Naive thymus-derived CD4-positive, alpha-beta T cell (primary cell): ENCODE measurements at regions of chr2 and their contacts with region 1.

Region 1: GRCh38 chr2:38581193-38582147 is 21.3 kb downstream of the HNRNPLL start:
- DNase-seq: peak in 7 of 9 donors; percentile 64 to 83 (median 77)
- ATAC-seq: peak; percentile 94
- H3K4me3 ChIP-seq: no peak overlapping the region
- H3K4me3 Mint-ChIP-seq: no peak overlapping the region
- H3K27ac ChIP-seq: no peak overlapping the region
- H3K27ac Mint-ChIP-seq: no peak overlapping the region
- H3K4me1 ChIP-seq: peaks cover 0 to 3% of the 10 kb centered on the region in 2 donors
- H3K4me1 Mint-ChIP-seq: peaks cover 0 to 23% (median 0%) of the 10 kb centered on the region in 7 donors
- H3K27me3 ChIP-seq: no peaks in the 10 kb centered on the region
- H3K27me3 Mint-ChIP-seq: no peaks in the 10 kb centered on the region

Region 2: GRCh38 chr2:38535744-38536506 is 45.5 kb before region 1 on chr2:
- CTCF ChIA-PET with region 1: interaction called, 4 read pairs
- POLR2A ChIA-PET with region 1: interaction called, 4 read pairs
- intact Hi-C with region 1: loop called (anchors 1 to 2 kb)
- DNase-seq: peak; percentile 48 to 88 (median 72)
- ATAC-seq: peak; percentile 95
- H3K4me3 ChIP-seq: peak overlapping the region; percentile 40
- H3K4me3 Mint-ChIP-seq: peak overlapping the region; percentile 36 to 72 (median 56)
- H3K27ac ChIP-seq: no peak overlapping the region
- H3K27ac Mint-ChIP-seq: peak overlapping the region in 1 of 9 donors; percentile 59
- H3K4me1 ChIP-seq: peaks cover 0 to 5% of the 10 kb centered on the region in 2 donors
- H3K4me1 Mint-ChIP-seq: peaks cover 0 to 6% (median 3%) of the 10 kb centered on the region in 7 donors
- H3K27me3 ChIP-seq: peaks cover 0 to 4% of the 10 kb centered on the region in 2 donors
- H3K27me3 Mint-ChIP-seq: peaks cover 4 to 37% (median 8%) of the 10 kb centered on the region in 5 donors

Region 3: DNA sequence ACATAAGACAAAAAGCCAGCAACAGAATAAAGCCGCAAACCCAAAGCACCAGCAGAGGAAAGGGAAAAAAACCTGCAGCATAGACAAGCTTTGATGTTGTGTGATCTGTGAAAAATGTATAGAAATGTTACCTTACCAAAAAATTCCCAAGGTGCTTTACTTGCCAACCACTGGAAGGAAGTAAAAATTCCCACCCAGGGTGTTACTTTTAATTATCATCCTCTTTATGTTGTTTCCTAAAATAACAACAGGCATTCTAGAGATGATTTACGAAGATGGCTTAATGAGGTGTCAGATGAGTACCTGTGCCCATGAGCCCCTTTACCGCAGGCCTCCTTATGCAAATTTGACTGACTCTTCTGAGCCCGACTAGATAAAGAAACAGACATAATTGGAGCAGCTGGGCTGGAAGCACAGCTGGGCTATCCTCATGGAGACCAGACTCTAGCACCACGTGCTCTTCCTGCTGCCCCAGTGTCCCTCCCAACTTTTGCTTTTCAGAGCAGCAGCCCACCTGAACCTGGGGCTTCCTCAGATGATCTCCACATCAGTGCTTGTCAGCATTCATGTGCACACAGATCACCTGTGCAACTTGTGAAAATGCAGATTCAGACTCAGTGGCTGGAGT is 128.2 kb after region 1 on chr2:
- CTCF ChIA-PET with region 1: interaction called, 19 read pairs
- POLR2A ChIA-PET with region 1: no interaction called
- intact Hi-C with region 1: no loop called
- DNase-seq: peak in 7 of 9 donors; percentile 64 to 81 (median 77)
- ATAC-seq: peak; percentile 87
- H3K4me3 ChIP-seq: peak overlapping the region; percentile 21
- H3K4me3 Mint-ChIP-seq: peak overlapping the region; percentile 67 to 86 (median 73)
- H3K27ac ChIP-seq: peak overlapping the region; percentile 15
- H3K27ac Mint-ChIP-seq: peak overlapping the region; percentile 81 to 95 (median 91)
- H3K4me1 ChIP-seq: peaks cover 24 to 31% of the 10 kb centered on the region in 2 donors
- H3K4me1 Mint-ChIP-seq: peaks cover 23 to 70% (median 58%) of the 10 kb centered on the region in 7 donors
- H3K27me3 ChIP-seq: no peaks in the 10 kb centered on the region
- H3K27me3 Mint-ChIP-seq: no peaks in the 10 kb centered on the region

Region 4: DNA sequence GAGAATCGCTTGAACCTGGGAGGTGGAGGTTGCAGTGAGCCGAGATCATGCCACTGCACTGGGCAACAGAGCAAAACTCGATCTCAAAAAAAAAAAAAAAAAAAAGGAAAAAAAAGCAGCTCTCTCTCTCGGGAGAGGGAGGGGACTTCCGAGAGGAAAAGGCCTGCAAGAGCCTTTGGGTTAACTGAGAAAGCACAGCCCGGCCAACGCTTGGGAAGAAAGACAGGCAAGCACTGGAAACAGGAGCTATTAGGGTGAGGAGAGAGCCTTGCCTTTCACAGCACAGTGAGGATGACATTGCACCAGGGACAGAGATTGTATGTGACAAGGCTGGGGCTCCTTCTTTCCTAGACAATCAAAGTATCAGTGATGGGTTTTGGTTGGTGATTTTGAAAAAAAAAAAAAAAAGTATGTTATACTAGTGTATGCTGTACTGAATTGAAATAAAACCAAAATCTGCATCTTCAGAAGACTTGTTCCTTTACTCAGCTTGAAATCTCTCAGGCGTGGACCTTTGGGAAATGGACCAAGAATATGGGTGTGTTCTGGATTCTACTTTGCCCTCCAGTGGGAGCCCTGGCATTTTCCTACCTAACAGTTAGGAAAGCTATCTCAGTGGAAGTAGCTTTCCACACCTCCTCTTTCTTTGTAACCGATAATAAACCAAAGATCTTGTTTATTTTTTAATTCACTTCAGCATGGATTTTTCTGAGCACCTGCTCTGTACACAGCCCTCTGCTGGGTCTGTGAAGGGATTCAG is 153.0 kb after region 1 on chr2:
- CTCF ChIA-PET with region 1: interaction called, 127 read pairs
- POLR2A ChIA-PET with region 1: interaction called, 4 read pairs
- intact Hi-C with region 1: no loop called
- DNase-seq: peak in 1 of 9 donors; percentile 15
- ATAC-seq: no peak
- H3K4me3 ChIP-seq: no peak overlapping the region
- H3K4me3 Mint-ChIP-seq: no peak overlapping the region
- H3K27ac ChIP-seq: no peak overlapping the region
- H3K27ac Mint-ChIP-seq: peak overlapping the region in 2 of 9 donors; percentile 55 to 83
- H3K4me1 ChIP-seq: no peaks in the 10 kb centered on the region
- H3K4me1 Mint-ChIP-seq: peaks cover 9 to 23% (median 13%) of the 10 kb centered on the region in 7 donors
- H3K27me3 ChIP-seq: no peaks in the 10 kb centered on the region
- H3K27me3 Mint-ChIP-seq: no peaks in the 10 kb centered on the region

Region 5: DNA sequence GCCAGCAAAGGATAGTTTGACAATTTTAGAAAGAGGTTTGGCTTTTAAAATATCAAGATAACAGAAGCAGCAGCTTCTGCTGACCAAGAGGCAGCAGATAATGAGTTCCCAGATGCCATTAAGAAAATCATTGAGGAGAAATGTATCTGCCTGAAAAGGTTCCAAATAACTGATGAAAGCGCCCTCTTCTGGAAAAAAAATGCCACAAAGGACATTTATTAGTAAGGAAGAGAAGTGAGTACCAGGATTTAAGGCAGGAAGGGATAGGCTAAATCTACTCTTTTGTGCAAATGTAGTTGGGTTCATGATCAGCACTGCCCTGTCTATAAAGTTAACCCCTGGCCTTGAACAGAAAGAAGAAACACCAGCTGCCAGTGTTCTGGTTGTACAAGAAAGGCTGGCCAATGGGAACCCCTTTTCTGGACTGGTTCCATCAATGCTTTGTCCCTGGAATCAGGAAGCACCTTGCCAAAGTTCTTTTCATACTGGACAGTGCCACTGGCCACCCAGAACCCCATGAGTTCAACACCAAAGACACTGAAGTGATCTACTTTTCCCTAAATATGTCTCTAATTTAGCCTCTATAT is 253.6 kb after region 1 on chr2:
- CTCF ChIA-PET with region 1: no interaction called
- POLR2A ChIA-PET with region 1: no interaction called
- intact Hi-C with region 1: loop called (anchors 1 to 2 kb)
- DNase-seq: peak in 1 of 9 donors; percentile 5
- ATAC-seq: no peak
- H3K4me3 ChIP-seq: no peak overlapping the region
- H3K4me3 Mint-ChIP-seq: no peak overlapping the region
- H3K27ac ChIP-seq: no peak overlapping the region
- H3K27ac Mint-ChIP-seq: no peak overlapping the region
- H3K4me1 ChIP-seq: no peaks in the 10 kb centered on the region
- H3K4me1 Mint-ChIP-seq: peaks cover 0 to 2% (median 0%) of the 10 kb centered on the region in 7 donors
- H3K27me3 ChIP-seq: no peaks in the 10 kb centered on the region
- H3K27me3 Mint-ChIP-seq: no peaks in the 10 kb centered on the region

Region 6: DNA sequence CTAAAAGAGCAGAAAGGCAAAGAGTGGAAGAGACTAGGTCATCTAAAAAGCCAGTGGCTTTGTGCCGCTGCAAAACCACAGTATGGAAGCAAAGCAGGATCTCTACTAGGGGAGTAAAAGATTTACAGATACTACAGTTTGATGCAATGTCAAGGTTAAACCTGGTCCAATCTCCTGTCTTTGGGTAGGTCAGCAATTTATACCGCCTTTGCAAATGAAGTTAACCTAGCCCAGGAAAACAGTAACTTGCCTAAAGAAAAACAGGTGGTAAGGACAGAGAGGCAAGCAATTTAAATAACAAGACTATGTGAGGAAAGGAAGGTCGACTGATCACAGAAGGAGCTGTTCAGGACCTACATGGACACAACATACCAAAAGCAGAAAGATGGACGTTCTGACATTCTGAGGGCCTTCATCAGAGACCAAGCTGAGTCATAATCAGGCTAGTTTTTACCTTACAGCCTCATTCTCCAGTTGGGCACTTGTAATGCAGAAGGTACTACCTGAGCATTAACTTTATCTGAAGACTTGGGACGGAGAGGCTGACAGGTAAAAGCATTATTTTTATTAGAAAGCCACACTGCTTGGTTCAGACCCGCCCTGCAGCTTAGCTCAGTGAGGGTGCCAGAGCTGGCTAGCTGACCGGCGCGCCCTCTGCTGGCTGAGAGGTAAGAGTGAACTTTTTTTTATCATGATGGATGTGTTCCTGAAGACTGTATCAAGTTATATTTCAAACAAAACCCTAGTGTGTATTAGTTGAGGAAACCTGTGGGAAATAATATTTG is 646.4 kb after region 1 on chr2:
- CTCF ChIA-PET with region 1: no interaction called
- POLR2A ChIA-PET with region 1: no interaction called
- intact Hi-C with region 1: loop called in 1 of 2 experiments (anchors 5 kb)
- DNase-seq: peak; percentile 58 to 83 (median 78)
- ATAC-seq: peak; percentile 93
- H3K4me3 ChIP-seq: peak overlapping the region; percentile 31
- H3K4me3 Mint-ChIP-seq: peak overlapping the region; percentile 49 to 85 (median 76)
- H3K27ac ChIP-seq: no peak overlapping the region
- H3K27ac Mint-ChIP-seq: peak overlapping the region in 4 of 9 donors; percentile 38 to 88 (median 65)
- H3K4me1 ChIP-seq: peaks cover 4 to 9% of the 10 kb centered on the region in 2 donors
- H3K4me1 Mint-ChIP-seq: peaks cover 8 to 43% (median 21%) of the 10 kb centered on the region in 7 donors
- H3K27me3 ChIP-seq: no peaks in the 10 kb centered on the region
- H3K27me3 Mint-ChIP-seq: peaks cover 0 to 6% (median 0%) of the 10 kb centered on the region in 5 donors